ENCODE measurements at regions of chr7 and their contacts with region 1.

Region 1: DNA sequence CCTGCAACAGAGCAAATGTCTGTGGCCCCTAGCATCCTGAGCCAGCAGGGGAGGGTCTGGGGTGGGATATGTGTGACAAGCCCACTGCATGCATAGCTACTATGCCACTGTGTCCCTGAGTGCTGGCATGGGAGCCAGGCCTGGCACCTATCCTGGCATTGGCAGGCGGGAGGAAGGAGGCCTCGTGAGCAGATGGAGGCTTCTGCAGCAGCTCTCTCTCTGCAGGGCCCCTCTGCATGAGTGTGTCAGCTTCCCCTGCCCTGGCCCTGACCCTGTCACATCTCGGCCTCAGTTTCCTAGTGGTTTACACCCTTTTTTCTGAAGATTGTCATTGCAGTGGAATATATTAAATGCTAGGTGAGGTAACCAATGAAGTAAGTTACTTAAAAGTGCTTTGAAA is 13.1 kb upstream of the IMPDH1 start:
- DNase-seq: peak in 1 of 2 donors; percentile 59
- H3K4me3 ChIP-seq: no peak overlapping the region
- H3K27ac ChIP-seq: no peak overlapping the region
- H3K4me1 ChIP-seq: peaks cover 0 to 14% (median 7%) of the 10 kb centered on the region in 4 donors
- H3K27me3 ChIP-seq: no peaks in the 10 kb centered on the region
- CTCF ChIP-seq: no peak
- EP300 ChIP-seq: no peak
- POLR2A ChIP-seq: no peak

Region 2: DNA sequence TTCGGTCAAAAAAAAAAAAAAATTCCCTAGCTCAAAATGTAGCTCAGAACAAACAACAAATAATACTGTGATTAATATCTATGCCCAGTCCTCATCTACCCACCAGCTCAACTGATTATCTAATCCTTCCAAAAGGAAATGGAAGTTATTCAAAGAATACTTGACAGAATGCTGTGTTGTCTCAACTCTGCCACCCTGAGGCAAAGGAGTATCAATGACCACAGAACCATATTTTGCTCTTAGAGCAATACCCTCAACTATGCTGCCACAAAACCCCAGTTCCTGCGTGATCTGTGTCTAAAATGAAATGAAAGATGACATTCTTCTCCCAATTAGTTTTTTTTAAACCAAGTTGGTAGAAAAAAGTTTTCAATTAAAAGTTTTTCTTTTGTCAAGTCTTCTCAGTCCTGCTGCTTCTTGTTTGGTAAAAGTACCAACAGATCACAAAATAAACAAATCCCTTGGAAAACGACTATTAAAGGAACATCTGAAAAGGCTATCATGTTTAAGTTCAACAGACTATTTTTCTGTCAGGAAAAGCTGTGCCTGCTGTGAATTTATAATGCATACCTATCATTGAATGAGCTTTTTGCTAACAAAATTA is 100.7 kb before region 1 on chr7:
- intact Hi-C with region 1: no loop called
- DNase-seq: peak in 1 of 2 donors; percentile 63
- H3K4me3 ChIP-seq: no peak overlapping the region
- H3K27ac ChIP-seq: no peak overlapping the region
- H3K4me1 ChIP-seq: peaks cover 0 to 5% (median 0%) of the 10 kb centered on the region in 4 donors
- H3K27me3 ChIP-seq: no peaks in the 10 kb centered on the region
- CTCF ChIP-seq: peak in 3 of 7 experiments; percentile 18 to 30 (median 25)
- EP300 ChIP-seq: no peak
- POLR2A ChIP-seq: no peak

Region 3: GRCh38 chr7:128352153-128352537 is 70.7 kb before region 1 on chr7:
- intact Hi-C with region 1: no loop called
- DNase-seq: peak; percentile 77 to 86
- H3K4me3 ChIP-seq: peak overlapping the region; percentile 33 to 45 (median 38)
- H3K27ac ChIP-seq: no peak overlapping the region
- H3K4me1 ChIP-seq: peaks cover 7 to 24% (median 13%) of the 10 kb centered on the region in 4 donors
- H3K27me3 ChIP-seq: peaks cover 0 to 53% (median 32%) of the 10 kb centered on the region in 3 donors
- CTCF ChIP-seq: peak in 5 of 7 experiments; percentile 47 to 71 (median 59)
- EP300 ChIP-seq: no peak
- POLR2A ChIP-seq: no peak

Region 4: GRCh38 chr7:128455551-128456254 is 32.9 kb after region 1 on chr7 and contains the start of gene HILPDA:
- intact Hi-C with region 1: loop called (anchors 5 kb)
- DNase-seq: peak; percentile 96 to 97
- H3K4me3 ChIP-seq: peak within 1 kb of the TSS; percentile 70 to 84 (median 77)
- H3K27ac ChIP-seq: peak within 1 kb of the TSS; percentile 90 to 96 (median 95)
- H3K4me1 ChIP-seq: peaks cover 46 to 69% (median 64%) of the 10 kb centered on the region in 4 donors
- H3K27me3 ChIP-seq: no peaks in the 10 kb centered on the region
- CTCF ChIP-seq: no peak
- EP300 ChIP-seq: no peak
- POLR2A ChIP-seq: peak in 2 of 4 donors; percentile 2 to 33
- total RNA-seq, gene HILPDA: 0.45 to 38.2 (median 2.3) TPM in 4 of 5 donors, not detected in the other

Measured in stomach (tissue), 19 donors.